ENCODE measurements at regions of chr19 and their contacts with region 1.

Region 1: GRCh38 chr19:12766051-12766521 is 9.3 kb downstream of the HOOK2 start:
- DNase-seq: peak; percentile 89
- H3K4me3 ChIP-seq: peak overlapping the region; percentile 57
- H3K27ac ChIP-seq: no peak overlapping the region
- H3K4me1 ChIP-seq: no peaks in the 10 kb centered on the region
- H3K27me3 ChIP-seq: no peaks in the 10 kb centered on the region
- CTCF ChIP-seq: peak; percentile 97

Region 2: GRCh38 chr19:12272980-12273901 is 492.8 kb before region 1 on chr19:
- CTCF ChIA-PET with region 1: no interaction called
- POLR2A ChIA-PET with region 1: no interaction called
- intact Hi-C with region 1: no loop called
- DNase-seq: no peak
- H3K4me3 ChIP-seq: no peak overlapping the region
- H3K27ac ChIP-seq: no peak overlapping the region
- H3K4me1 ChIP-seq: no peaks in the 10 kb centered on the region
- H3K27me3 ChIP-seq: no peaks in the 10 kb centered on the region
- CTCF ChIP-seq: no peak

Region 3: DNA sequence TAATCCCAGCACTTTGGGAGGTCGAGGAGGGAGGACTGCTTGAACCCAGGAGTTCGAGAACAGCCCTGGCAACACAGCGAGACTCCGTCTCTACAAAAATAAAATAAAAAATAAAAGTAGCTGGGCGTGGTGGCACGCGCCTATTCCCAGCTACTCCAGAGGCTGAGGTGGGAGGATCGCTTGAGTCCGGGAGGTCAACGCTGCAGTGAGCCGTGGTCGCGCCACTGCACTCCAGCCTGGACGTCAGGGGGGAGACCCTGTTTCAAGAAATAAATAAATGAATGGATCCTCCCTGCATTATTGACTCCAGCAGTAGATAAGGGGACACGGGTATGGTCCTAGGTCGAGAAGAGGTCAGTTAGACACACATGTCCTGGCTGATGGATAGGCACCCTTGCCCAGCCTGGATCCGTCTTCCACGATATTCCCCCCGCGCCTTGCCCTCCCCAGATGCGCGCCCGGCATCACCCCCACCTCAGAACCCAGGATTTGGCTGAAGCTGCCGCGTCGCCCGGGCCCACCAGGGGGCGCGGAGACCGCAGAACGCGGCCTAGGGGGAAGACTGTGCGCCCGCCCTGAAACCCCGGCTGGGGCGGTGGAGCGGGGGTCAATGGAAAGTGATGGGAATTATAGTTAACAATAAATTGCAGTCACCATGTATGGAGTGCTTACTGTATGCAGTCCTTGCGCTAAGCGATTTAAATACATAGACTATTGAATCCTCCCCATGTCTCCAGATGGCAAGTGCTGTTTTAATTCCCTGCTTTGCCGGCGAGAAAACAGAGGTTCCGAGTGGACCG is 11.3 kb after region 1 on chr19:
- CTCF ChIA-PET with region 1: interaction called, 14 read pairs
- POLR2A ChIA-PET with region 1: interaction called, 7 read pairs
- intact Hi-C with region 1: no loop called
- DNase-seq: peak; percentile 91
- H3K4me3 ChIP-seq: peak overlapping the region; percentile 48
- H3K27ac ChIP-seq: peak overlapping the region; percentile 73
- H3K4me1 ChIP-seq: peaks cover 23% of the 10 kb centered on the region
- H3K27me3 ChIP-seq: no peaks in the 10 kb centered on the region
- CTCF ChIP-seq: peak; percentile 98

Region 4: DNA sequence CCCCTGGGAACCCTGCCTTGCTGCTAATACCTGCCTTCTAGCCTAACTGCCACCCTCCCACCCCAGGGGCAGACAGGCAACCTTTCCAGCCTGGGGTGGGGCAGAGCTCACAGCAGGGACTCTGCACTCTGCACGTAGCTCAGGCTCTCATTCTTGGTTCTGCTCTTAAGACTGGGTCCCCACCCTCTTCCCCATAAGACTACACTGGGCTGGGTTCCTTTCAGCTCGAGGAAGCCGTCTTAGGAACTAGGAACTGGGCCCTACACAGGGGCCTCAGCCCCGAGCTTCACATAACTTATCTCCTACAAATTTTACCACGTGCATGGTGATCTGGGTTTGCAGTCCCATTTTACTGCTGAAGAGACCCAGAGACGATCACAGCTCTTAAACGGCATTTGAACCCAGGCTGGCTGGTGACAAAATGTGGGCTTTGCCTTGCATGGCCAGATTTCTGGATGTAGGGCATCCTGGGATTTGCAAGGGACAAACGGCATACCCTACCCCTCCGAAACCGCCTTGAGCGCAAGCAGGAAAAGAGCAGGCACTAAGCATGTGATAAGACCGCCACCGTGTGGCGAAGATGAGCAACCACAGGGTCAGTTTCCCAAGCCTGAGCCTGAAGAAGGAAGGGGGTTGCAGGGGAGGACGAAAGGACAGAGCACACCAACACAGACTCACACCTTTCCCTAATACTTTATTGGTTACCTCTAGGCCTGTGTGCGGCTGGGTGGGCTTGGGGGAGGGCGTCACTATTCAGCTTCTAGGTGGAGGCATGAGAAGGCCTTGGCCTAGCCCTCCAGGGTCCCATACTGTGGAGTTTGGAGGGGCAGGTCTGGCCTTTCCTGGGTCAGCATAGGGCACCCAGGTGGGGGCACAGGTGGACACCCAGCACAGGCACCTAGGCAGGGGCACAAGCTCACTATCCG is 30.3 kb after region 1 on chr19:
- CTCF ChIA-PET with region 1: interaction called, 34 read pairs
- POLR2A ChIA-PET with region 1: interaction called, 6 read pairs
- intact Hi-C with region 1: loop called (anchors 2 kb)
- DNase-seq: peak; percentile 91
- H3K4me3 ChIP-seq: no peak overlapping the region
- H3K27ac ChIP-seq: no peak overlapping the region
- H3K4me1 ChIP-seq: peaks cover 23% of the 10 kb centered on the region
- H3K27me3 ChIP-seq: no peaks in the 10 kb centered on the region
- CTCF ChIP-seq: peak; percentile 94

Region 5: DNA sequence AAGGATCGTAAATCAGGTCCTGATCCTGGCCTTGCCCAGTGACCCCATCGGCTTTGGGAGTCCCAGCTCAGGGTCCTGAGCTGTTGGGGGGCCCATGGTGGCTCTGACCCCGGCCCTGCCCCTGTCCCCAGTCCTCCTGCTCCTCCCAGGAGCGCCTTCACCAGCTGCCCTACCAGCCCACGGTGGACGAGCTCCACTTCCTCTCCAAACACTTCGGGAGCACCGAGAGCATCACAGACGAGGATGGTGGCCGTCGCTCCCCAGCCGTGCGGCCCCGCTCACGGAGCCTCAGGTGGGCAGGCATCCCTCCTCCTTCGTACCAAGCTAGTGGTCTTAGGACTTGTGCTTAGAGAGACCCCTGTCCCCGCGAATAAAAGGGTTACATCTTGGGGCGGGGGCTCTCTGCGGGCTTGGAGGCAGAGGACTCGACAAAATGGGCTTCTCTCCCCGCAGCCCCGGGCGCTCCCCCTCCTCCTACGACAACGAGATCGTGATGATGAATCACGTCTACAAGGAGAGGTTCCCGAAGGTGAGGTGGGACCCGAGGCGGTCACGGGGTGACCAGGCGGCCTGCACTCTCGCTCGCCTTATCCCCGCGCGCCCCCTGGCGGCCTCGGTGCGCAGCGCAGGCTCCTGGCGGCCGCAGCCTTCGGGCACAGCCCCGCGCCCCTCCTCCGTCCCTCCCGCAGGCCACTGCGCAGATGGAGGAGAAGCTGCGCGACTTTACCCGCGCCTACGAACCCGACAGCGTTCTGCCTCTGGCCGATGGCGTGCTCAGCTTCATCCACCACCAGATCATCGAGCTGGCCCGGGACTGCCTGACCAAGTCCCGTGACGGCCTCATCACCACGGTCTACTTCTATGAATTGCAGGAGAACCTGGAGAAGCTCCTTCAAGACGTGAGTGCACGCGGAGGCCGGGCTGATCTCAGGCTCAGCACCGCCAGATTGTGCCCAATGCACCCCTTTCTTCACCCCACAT is 81.4 kb after region 1 on chr19:
- CTCF ChIA-PET with region 1: interaction called, 20 read pairs
- POLR2A ChIA-PET with region 1: no interaction called
- intact Hi-C with region 1: loop called (anchors 2 kb)
- DNase-seq: peak; percentile 76
- H3K4me3 ChIP-seq: peak overlapping the region; percentile 22
- H3K27ac ChIP-seq: no peak overlapping the region
- H3K4me1 ChIP-seq: no peaks in the 10 kb centered on the region
- H3K27me3 ChIP-seq: no peaks in the 10 kb centered on the region
- CTCF ChIP-seq: peak; percentile 98

Measured in A673 (cell line).